Naive thymus-derived CD4-positive, alpha-beta T cell (primary cell): ENCODE measurements at regions of chr15 and their contacts with region 1.

Region 1: GRCh38 chr15:25438601-25439368 is at the start of gene UBE3A:
- DNase-seq: peak; percentile 76 to 94 (median 88)
- ATAC-seq: peak; percentile 96
- H3K4me3 ChIP-seq: peak within 1 kb of the TSS; percentile 80
- H3K4me3 Mint-ChIP-seq: peak within 1 kb of the TSS; percentile 88 to 96 (median 92)
- H3K27ac ChIP-seq: peak within 1 kb of the TSS; percentile 93
- H3K27ac Mint-ChIP-seq: peak within 1 kb of the TSS; percentile 79 to 97 (median 93)
- H3K4me1 ChIP-seq: peaks cover 23 to 28% of the 10 kb centered on the region in 2 donors
- H3K4me1 Mint-ChIP-seq: peaks cover 17 to 42% (median 36%) of the 10 kb centered on the region in 7 donors
- H3K27me3 ChIP-seq: no peaks in the 10 kb centered on the region
- H3K27me3 Mint-ChIP-seq: no peaks in the 10 kb centered on the region
- total RNA-seq, gene UBE3A: 87.0 to 143 (median 127) TPM

Region 2: DNA sequence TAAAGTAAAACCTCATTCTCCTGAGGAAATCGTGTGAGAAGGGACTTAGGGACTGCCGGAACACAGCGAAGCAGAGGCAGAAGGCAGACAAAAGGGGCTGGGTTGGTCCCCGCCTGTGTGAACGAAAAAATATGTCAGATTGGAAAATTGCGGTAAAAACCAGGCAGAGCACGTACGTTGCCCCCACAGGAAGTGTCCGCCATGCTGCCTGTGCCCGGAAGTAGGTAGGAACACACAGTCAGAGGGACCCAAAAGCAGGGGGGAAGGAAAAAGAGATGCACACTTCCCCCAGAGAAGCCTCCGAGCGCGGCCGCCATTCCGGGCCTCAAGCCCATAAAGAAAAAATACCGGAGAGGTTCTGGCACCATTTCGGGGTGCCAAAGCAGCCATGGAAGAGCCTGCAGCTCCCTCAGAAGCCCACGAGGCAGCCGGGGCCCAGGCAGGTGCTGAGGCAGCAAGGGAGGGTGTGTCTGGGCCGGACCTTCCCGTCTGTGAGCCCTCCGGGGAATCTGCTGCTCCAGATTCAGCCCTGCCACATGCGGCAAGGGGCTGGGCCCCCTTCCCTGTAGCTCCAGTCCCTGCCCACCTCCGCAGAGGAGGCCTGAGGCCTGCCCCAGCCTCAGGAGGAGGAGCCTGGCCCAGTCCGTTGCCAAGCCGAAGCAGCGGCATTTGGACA is 1873.3 kb before region 1 on chr15 and contains the start of gene MKRN3:
- CTCF ChIA-PET with region 1: no interaction called
- POLR2A ChIA-PET with region 1: no interaction called
- intact Hi-C with region 1: loop called in 1 of 2 experiments (anchors 2 kb)
- DNase-seq: peak in 8 of 9 donors; percentile 14 to 68 (median 47)
- ATAC-seq: no peak
- H3K4me3 ChIP-seq: peak within 1 kb of the TSS; percentile 39
- H3K4me3 Mint-ChIP-seq: peak within 1 kb of the TSS; percentile 42 to 86 (median 72)
- H3K27ac ChIP-seq: peak within 1 kb of the TSS; percentile 70
- H3K27ac Mint-ChIP-seq: peak within 1 kb of the TSS in 8 of 9 donors; percentile 75 to 93 (median 82)
- H3K4me1 ChIP-seq: no peaks in the 10 kb centered on the region
- H3K4me1 Mint-ChIP-seq: peaks cover 0 to 13% (median 0%) of the 10 kb centered on the region in 7 donors
- H3K27me3 ChIP-seq: no peaks in the 10 kb centered on the region
- H3K27me3 Mint-ChIP-seq: peaks cover 0 to 13% (median 6%) of the 10 kb centered on the region in 5 donors
- total RNA-seq, gene MKRN3: 0.37 to 11.5 (median 1.8) TPM

Region 3: GRCh38 chr15:24761704-24762302 is 677.0 kb before region 1 on chr15:
- CTCF ChIA-PET with region 1: no interaction called
- POLR2A ChIA-PET with region 1: no interaction called
- intact Hi-C with region 1: loop called in 1 of 2 experiments (anchors 5 kb)
- DNase-seq: no peak
- ATAC-seq: no peak
- H3K4me3 ChIP-seq: no peak overlapping the region
- H3K4me3 Mint-ChIP-seq: no peak overlapping the region
- H3K27ac ChIP-seq: no peak overlapping the region
- H3K27ac Mint-ChIP-seq: no peak overlapping the region
- H3K4me1 ChIP-seq: no peaks in the 10 kb centered on the region
- H3K4me1 Mint-ChIP-seq: no peaks in the 10 kb centered on the region
- H3K27me3 ChIP-seq: no peaks in the 10 kb centered on the region
- H3K27me3 Mint-ChIP-seq: no peaks in the 10 kb centered on the region

Region 4: GRCh38 chr15:25329696-25330095 is 109.1 kb before region 1 on chr15:
- CTCF ChIA-PET with region 1: no interaction called
- POLR2A ChIA-PET with region 1: no interaction called
- intact Hi-C with region 1: loop called in 1 of 2 experiments (anchors 5 kb)
- DNase-seq: no peak
- ATAC-seq: no peak
- H3K4me3 ChIP-seq: no peak overlapping the region
- H3K4me3 Mint-ChIP-seq: no peak overlapping the region
- H3K27ac ChIP-seq: no peak overlapping the region
- H3K27ac Mint-ChIP-seq: no peak overlapping the region
- H3K4me1 ChIP-seq: no peaks in the 10 kb centered on the region
- H3K4me1 Mint-ChIP-seq: peaks cover 0 to 3% (median 0%) of the 10 kb centered on the region in 7 donors
- H3K27me3 ChIP-seq: no peaks in the 10 kb centered on the region
- H3K27me3 Mint-ChIP-seq: no peaks in the 10 kb centered on the region

Region 5: GRCh38 chr15:26082221-26083109 is 643.7 kb after region 1 on chr15:
- CTCF ChIA-PET with region 1: no interaction called
- POLR2A ChIA-PET with region 1: interaction called, 3 read pairs
- intact Hi-C with region 1: loop called (anchors 1 kb)
- DNase-seq: peak; percentile 90 to 97 (median 96)
- ATAC-seq: peak; percentile 97
- H3K4me3 ChIP-seq: peak overlapping the region; percentile 83
- H3K4me3 Mint-ChIP-seq: peak overlapping the region; percentile 84 to 97 (median 92)
- H3K27ac ChIP-seq: peak overlapping the region; percentile 78
- H3K27ac Mint-ChIP-seq: peak overlapping the region; percentile 86 to 100 (median 98)
- H3K4me1 ChIP-seq: peaks cover 0 to 3% of the 10 kb centered on the region in 2 donors
- H3K4me1 Mint-ChIP-seq: peaks cover 13 to 58% (median 43%) of the 10 kb centered on the region in 7 donors
- H3K27me3 ChIP-seq: no peaks in the 10 kb centered on the region
- H3K27me3 Mint-ChIP-seq: peaks cover 0 to 18% (median 0%) of the 10 kb centered on the region in 5 donors